AG04450 (cell line): ENCODE measurements at regions of chr6 and their contacts with region 1.

Region 1: DNA sequence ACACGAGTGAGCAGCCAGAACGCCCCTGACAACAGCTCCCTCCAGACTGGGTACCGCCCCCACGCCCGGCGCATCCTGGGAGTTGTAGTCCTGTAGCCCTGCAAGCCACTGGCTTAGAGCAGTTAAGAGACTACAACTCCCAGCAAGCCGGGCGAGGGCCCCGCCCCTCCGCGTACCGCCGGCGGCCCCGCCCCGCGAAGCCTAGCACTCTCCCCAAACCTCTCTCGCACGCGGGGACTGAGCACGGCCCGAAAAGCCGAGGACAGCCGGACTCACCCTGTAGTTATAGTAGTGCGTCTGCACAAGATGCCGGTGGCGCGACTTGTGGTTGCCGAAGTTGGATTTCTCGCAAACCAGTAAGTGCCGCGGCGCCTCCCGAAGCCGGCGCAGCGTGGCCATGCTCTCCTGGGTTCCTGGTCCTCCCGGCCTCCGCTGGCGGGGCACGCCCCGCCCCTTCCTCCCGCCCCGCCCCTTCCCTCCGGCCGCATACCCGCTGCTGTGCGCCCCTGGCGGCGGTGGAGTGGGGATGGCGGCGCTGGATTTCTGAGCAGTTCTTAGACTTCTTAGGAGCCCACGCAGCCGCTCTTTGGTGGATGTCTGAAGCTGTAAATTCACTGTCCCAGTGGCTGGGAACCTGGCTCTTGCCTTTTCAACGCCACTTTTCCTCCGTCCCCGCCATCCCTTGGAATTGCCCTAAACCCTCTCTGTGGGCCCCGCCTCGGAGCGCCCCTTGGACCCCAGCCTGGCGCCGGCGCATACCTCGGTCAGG is at the start of gene RPP40:
- DNase-seq: peak; percentile 91
- H3K4me3 ChIP-seq: peak within 1 kb of the TSS; percentile 89
- H3K27ac ChIP-seq: peak within 1 kb of the TSS; percentile 80
- H3K27me3 ChIP-seq: no peaks in the 10 kb centered on the region
- CTCF ChIP-seq: peak; percentile 84
- polyA plus RNA-seq, gene RPP40: 7.6 and 8.2 TPM in 2 replicates

Region 2: DNA sequence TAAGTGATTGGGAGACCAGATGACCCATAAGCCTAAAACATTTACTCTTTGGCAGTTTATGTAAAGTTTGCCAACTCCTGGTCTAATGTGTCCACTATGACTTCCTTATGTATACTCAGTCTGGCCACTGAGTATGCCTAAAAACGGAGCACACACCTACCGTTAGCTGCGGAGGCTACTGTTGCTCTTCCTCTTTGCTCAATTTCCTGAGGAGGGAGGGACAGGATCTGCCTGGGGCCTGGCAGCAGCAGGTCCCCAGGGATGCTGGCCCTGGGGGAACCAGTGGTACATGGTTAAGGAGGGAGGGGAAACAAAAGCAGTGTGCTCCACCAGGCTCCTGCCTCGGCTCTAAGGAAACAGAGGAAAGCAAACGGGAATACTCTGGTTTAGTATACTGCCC is 114.1 kb before region 1 on chr6:
- CTCF ChIA-PET with region 1: interaction called, 15 read pairs
- POLR2A ChIA-PET with region 1: no interaction called
- DNase-seq: no peak
- H3K4me3 ChIP-seq: no peak overlapping the region
- H3K27ac ChIP-seq: no peak overlapping the region
- H3K27me3 ChIP-seq: no peaks in the 10 kb centered on the region
- CTCF ChIP-seq: no peak

Region 3: GRCh38 chr6:4973982-4974745 is 29.6 kb before region 1 on chr6:
- CTCF ChIA-PET with region 1: interaction called, 12 read pairs
- POLR2A ChIA-PET with region 1: interaction called, 5 read pairs
- DNase-seq: peak; percentile 37
- H3K4me3 ChIP-seq: no peak overlapping the region
- H3K27ac ChIP-seq: peak overlapping the region; percentile 49
- H3K27me3 ChIP-seq: peaks cover 5% of the 10 kb centered on the region
- CTCF ChIP-seq: no peak

Region 4: DNA sequence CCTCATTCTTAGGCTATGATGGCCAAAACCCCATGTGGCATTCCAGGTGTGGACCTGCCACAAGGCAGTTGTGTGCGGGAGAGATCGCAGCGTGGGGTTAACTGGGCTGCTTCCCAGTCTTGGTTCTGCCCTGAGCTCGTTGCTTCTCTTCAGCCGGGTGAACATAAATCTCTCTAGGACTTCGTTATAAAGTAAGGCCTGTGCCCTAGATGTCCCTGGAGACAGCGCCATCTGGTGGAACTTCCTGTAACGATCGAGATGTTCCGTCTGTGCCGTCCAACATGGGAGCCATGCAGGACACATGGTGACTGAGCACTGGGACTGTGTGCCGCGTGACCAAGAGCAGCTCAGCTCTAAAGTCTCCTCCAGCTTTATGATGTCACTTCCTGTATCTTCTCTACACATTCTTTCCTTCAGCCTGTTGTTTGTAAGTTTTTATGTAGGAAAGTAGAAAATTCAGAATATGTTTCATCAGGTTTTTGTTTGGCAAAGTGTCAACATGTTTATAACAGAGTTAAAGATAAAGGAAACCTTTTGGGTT is 26.9 kb after region 1 on chr6:
- CTCF ChIA-PET with region 1: interaction called, 15 read pairs
- POLR2A ChIA-PET with region 1: interaction called, 3 read pairs
- DNase-seq: no peak
- H3K4me3 ChIP-seq: no peak overlapping the region
- H3K27ac ChIP-seq: no peak overlapping the region
- H3K27me3 ChIP-seq: no peaks in the 10 kb centered on the region
- CTCF ChIP-seq: peak; percentile 66

Region 5: DNA sequence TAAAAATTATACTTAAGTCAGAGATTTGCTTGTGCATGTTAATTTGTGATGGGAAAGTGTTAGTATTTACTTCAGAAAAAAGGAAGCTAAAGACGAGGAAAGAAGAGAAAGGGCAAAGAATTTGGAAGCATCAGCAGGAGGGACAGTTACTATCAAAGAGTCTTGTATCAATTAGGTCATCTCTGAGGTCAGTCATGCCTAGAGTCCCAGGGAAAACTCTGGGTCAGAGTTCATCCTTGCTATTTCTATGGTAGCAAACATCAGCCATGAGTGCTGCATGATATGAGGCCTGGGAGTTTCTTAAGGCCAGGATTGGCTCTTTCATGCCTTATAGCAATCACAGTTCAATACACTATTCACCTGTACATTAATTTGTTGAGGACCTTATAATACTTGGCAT is 550.4 kb after region 1 on chr6:
- CTCF ChIA-PET with region 1: interaction called, 12 read pairs
- POLR2A ChIA-PET with region 1: no interaction called
- DNase-seq: no peak
- H3K4me3 ChIP-seq: no peak overlapping the region
- H3K27ac ChIP-seq: no peak overlapping the region
- H3K27me3 ChIP-seq: no peaks in the 10 kb centered on the region
- CTCF ChIP-seq: no peak